AG04450 (cell line): ENCODE measurements at regions of chr7 and their contacts with region 1.

Region 1: GRCh38 chr7:142385491-142386340 is 127.9 kb upstream of the PRSS58 start:
- DNase-seq: peak; percentile 33
- H3K4me3 ChIP-seq: no peak overlapping the region
- H3K27ac ChIP-seq: no peak overlapping the region
- H3K27me3 ChIP-seq: no peaks in the 10 kb centered on the region
- CTCF ChIP-seq: peak; percentile 81

Region 2: DNA sequence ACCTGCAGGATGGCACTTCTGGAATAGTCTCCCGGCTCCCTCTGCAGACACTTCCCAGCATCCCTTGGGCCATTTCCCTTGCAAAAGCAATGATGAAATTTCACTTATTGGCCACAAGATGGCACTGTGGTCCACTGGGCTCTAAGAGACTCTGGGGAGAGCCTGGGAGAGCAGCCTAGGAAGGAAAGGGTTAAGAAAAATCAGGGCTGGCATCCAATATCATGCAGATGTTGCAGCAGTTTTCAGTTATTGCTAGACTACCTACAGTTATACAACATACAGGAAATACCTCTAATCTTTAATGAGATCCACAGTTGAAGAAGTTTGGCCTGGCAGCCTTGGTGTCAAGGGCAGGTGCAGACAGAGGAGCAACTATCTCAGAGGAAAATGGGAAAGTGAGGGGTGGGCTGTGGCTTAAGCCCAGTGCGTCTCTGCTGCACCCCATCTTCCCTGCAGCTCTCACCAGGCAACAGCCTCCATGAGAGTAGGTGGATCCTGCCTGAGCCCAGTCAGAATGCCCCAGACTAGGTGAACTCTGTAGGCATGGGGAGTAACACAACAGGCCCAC is 27.7 kb before region 1 on chr7:
- CTCF ChIA-PET with region 1: interaction called, 24 read pairs
- POLR2A ChIA-PET with region 1: no interaction called
- DNase-seq: peak; percentile 54
- H3K4me3 ChIP-seq: no peak overlapping the region
- H3K27ac ChIP-seq: no peak overlapping the region
- H3K27me3 ChIP-seq: no peaks in the 10 kb centered on the region
- CTCF ChIP-seq: peak; percentile 83

Region 3: DNA sequence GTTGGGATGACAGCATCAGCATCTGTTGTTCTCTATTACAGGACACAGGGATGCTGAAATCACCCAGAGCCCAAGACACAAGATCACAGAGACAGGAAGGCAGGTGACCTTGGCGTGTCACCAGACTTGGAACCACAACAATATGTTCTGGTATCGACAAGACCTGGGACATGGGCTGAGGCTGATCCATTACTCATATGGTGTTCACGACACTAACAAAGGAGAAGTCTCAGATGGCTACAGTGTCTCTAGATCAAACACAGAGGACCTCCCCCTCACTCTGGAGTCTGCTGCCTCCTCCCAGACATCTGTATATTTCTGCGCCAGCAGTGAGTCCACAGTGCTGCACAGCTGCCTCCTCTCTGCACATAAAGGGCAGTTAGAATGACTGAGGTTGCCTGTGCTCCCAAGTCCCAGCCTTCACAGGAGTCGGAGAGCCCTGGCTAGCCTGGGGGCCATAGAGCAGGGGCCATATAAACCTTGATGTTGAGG is 14.4 kb after region 1 on chr7:
- CTCF ChIA-PET with region 1: interaction called, 11 read pairs
- POLR2A ChIA-PET with region 1: no interaction called
- DNase-seq: no peak
- H3K4me3 ChIP-seq: no peak overlapping the region
- H3K27ac ChIP-seq: no peak overlapping the region
- H3K27me3 ChIP-seq: peaks cover 14% of the 10 kb centered on the region
- CTCF ChIP-seq: no peak

Region 4: GRCh38 chr7:142412551-142413193 is 27.0 kb after region 1 on chr7:
- CTCF ChIA-PET with region 1: interaction called, 19 read pairs
- POLR2A ChIA-PET with region 1: no interaction called
- DNase-seq: no peak
- H3K4me3 ChIP-seq: no peak overlapping the region
- H3K27ac ChIP-seq: no peak overlapping the region
- H3K27me3 ChIP-seq: no peaks in the 10 kb centered on the region
- CTCF ChIP-seq: peak; percentile 73

Region 5: GRCh38 chr7:142496545-142497041 is 110.9 kb after region 1 on chr7:
- CTCF ChIA-PET with region 1: interaction called, 10 read pairs
- POLR2A ChIA-PET with region 1: no interaction called
- DNase-seq: no peak
- H3K4me3 ChIP-seq: no peak overlapping the region
- H3K27ac ChIP-seq: no peak overlapping the region
- H3K27me3 ChIP-seq: peaks cover 5% of the 10 kb centered on the region
- CTCF ChIP-seq: peak; percentile 70